Activated CD8-positive, alpha-beta T cell treated with anti-CD3 and anti-CD28 coated beads for 36 hours (primary cell): ENCODE measurements at regions of chr1 and their contacts with region 1.

Region 1: GRCh38 chr1:243850452-243851256 is 611 bp upstream of the AKT3 start:
- DNase-seq: peak; percentile 88
- ATAC-seq: peak; percentile 61
- H3K4me3 Mint-ChIP-seq: peak overlapping the region; percentile 77
- H3K27ac Mint-ChIP-seq: peak overlapping the region; percentile 89
- H3K4me1 Mint-ChIP-seq: peaks cover 30% of the 10 kb centered on the region
- H3K27me3 Mint-ChIP-seq: no peaks in the 10 kb centered on the region
- CTCF ChIP-seq: no peak

Region 2: GRCh38 chr1:243748706-243749283 is 101.9 kb before region 1 on chr1:
- CTCF ChIA-PET with region 1: no interaction called
- POLR2A ChIA-PET with region 1: no interaction called
- intact Hi-C with region 1: no loop called
- DNase-seq: peak; percentile 8
- ATAC-seq: peak; percentile 97
- H3K4me3 Mint-ChIP-seq: no peak overlapping the region
- H3K27ac Mint-ChIP-seq: no peak overlapping the region
- H3K4me1 Mint-ChIP-seq: peaks cover 34% of the 10 kb centered on the region
- H3K27me3 Mint-ChIP-seq: no peaks in the 10 kb centered on the region
- CTCF ChIP-seq: peak; percentile 73

Region 3: DNA sequence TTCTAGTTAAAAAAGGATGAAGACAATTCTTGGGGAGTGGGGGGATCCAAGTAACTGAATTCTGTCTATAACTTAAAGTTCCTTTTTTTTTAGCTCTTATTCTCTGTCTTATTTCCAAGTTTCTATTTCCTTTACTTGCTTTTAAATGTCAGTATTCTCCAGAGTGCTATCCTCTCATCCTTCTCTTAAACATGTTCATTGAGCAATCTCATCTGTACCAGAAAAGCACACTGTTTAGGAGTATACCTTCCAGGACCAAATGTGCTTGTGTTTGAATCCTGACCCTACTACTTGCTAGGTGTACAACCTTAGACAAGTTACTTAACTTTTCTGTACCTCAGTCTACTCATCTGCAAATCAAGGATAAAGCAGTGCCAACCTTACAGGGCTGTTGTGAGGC is 50.7 kb before region 1 on chr1:
- CTCF ChIA-PET with region 1: interaction called, 3 read pairs
- POLR2A ChIA-PET with region 1: no interaction called
- intact Hi-C with region 1: loop called (anchors 5 kb)
- DNase-seq: no peak
- ATAC-seq: no peak
- H3K4me3 Mint-ChIP-seq: no peak overlapping the region
- H3K27ac Mint-ChIP-seq: no peak overlapping the region
- H3K4me1 Mint-ChIP-seq: peaks cover 37% of the 10 kb centered on the region
- H3K27me3 Mint-ChIP-seq: no peaks in the 10 kb centered on the region
- CTCF ChIP-seq: no peak